SK-N-SH (cell line): ENCODE measurements at regions of chr3 and their contacts with region 1.

Region 1: DNA sequence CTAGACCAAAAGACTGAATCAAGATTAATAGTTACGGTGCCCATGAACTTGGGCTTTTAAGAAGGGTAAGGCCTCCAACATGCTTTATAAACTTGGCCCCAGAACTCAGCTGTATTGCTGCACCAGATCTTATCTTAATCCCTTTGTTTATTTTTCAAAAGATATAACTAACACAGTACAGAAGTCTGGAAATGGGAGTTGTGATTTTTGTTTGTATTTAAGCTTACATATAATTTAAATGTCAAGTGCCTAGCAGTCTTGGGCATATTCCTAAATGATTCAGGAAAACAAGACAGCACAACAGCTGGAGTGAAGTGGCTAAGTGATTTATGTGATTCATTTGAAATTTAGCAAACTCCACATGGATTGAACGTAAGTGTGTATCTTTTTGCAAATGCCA is 56.2 kb downstream of the NBEAL2 start:
- DNase-seq: no peak
- H3K4me3 ChIP-seq: no peak overlapping the region
- H3K27ac ChIP-seq: no peak overlapping the region; a peak in 1 of 4 replicates
- H3K4me1 ChIP-seq: no peaks in the 10 kb centered on the region
- H3K27me3 ChIP-seq: no peaks in the 10 kb centered on the region
- CTCF ChIP-seq: no peak
- EP300 ChIP-seq: no peak
- RAD21 ChIP-seq: no peak

Region 2: DNA sequence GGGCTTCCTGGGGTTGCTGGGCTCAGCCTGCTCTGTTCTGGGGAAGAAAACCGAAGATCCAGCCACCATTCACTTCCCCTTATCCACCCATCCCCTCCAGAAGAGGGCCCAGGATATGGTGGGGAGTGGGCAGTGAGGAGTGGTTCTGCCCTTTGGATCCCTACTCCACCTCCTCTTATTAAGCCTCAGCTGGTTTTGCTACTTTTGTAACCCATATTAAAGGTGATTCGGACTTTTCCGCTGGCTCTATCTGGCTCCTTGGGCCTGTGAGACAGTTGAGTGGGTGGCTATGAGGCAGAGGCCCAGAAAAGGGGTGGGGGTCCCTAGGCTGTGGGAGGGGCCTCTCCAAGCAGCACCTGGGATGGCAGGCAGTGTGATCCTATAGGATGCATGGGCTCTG is 22.4 kb before region 1 on chr3:
- CTCF ChIA-PET with region 1: no interaction called
- POLR2A ChIA-PET with region 1: no interaction called
- DNase-seq: no peak
- H3K4me3 ChIP-seq: no peak overlapping the region
- H3K27ac ChIP-seq: no peak overlapping the region
- H3K4me1 ChIP-seq: peaks cover 14 to 15% of the 10 kb centered on the region in 2 experiments; a peak in 3 of 4 replicates
- H3K27me3 ChIP-seq: no peaks in the 10 kb centered on the region
- CTCF ChIP-seq: no peak
- EP300 ChIP-seq: no peak
- RAD21 ChIP-seq: no peak

Region 3: GRCh38 chr3:47047673-47048072 is 12.0 kb after region 1 on chr3:
- CTCF ChIA-PET with region 1: interaction called, 10 read pairs
- POLR2A ChIA-PET with region 1: no interaction called
- DNase-seq: no peak
- H3K4me3 ChIP-seq: no peak overlapping the region
- H3K27ac ChIP-seq: no peak overlapping the region
- H3K4me1 ChIP-seq: no peaks in the 10 kb centered on the region
- H3K27me3 ChIP-seq: no peaks in the 10 kb centered on the region
- CTCF ChIP-seq: no peak
- EP300 ChIP-seq: no peak
- RAD21 ChIP-seq: no peak